Prostate gland (tissue), 2 donors: ENCODE measurements at regions of chrX and their contacts with region 1.

Region 1: GRCh38 chrX:123960042-123960611 is 1.4 kb upstream of the STAG2 start:
- DNase-seq: peak; percentile 87
- H3K4me3 ChIP-seq: peak overlapping the region; percentile 49 to 57
- H3K27ac ChIP-seq: peak overlapping the region; percentile 98 to 99
- H3K4me1 ChIP-seq: no peaks in the 10 kb centered on the region
- H3K27me3 ChIP-seq: no peaks in the 10 kb centered on the region
- CTCF ChIP-seq: peak; percentile 66 to 98 (median 84)
- POLR2A ChIP-seq: peak; percentile 89

Region 2: GRCh38 chrX:124018023-124018422 is 57.9 kb after region 1 on chrX:
- intact Hi-C with region 1: loop called (anchors 5 kb)
- DNase-seq: no peak
- H3K4me3 ChIP-seq: no peak overlapping the region
- H3K27ac ChIP-seq: no peak overlapping the region
- H3K4me1 ChIP-seq: no peaks in the 10 kb centered on the region
- H3K27me3 ChIP-seq: no peaks in the 10 kb centered on the region
- CTCF ChIP-seq: peak in 1 of 4 experiments; percentile 14
- POLR2A ChIP-seq: no peak

Region 3: DNA sequence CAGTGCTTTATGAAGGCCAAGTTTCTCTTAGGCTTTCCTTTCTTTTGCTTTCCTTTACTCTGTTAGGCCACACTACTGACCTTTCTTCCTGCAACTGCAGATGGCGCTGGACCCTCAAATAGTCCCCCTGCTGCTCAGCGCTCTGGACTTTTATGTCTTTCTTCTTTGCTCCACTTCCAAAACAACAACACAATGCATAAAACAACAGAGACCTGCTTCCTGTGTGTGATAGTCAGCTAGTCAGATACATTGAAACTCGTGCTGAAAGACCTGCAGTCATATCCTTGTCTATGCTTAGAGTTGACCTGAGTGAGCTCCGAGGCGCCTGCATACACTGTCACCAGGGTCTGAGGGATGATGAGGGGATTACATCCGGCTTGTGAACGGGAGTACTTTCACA is 263.4 kb after region 1 on chrX:
- intact Hi-C with region 1: no loop called
- DNase-seq: no peak
- H3K4me3 ChIP-seq: no peak overlapping the region
- H3K27ac ChIP-seq: no peak overlapping the region
- H3K4me1 ChIP-seq: no peaks in the 10 kb centered on the region
- H3K27me3 ChIP-seq: no peaks in the 10 kb centered on the region
- CTCF ChIP-seq: no peak
- POLR2A ChIP-seq: no peak